ENCODE measurements at regions of chr5 and their contacts with region 1.

Region 1: DNA sequence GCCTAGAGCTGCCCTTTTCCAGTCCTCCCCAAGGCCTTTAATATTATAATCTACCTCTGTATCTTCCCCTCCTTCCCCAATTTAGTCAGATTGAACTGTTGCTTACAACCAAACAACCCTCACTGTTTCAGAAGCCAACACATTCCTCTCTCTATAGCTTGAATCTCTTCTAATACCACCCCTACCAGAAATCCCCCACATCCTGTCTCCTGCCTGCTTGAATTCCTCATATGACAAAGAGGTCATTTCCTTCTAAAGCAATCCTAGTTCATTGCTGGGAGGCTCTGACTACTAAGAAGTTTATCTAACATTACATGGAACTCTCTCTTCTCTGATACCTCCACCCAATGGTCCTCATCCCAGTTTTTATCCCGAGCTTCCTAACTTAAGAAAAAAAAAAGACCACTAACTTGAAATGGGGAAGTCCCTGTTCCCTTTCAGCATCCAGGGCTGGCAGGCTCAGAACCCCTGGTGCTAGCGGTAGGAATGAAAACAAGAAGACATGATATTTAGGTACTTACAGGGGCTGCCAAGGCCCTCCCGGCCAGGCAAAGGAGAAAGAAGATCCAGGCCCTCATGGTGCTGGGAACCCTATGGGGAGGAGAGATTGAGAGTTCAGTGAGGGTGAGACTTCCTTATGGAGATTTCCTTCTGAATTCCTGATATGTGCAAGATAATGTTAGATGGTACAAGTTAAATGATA is 11.0 kb downstream of the SPARC start:
- DNase-seq: no peak
- H3K4me3 ChIP-seq: peak overlapping the region; percentile 39
- H3K27ac ChIP-seq: peak overlapping the region; percentile 90
- H3K27me3 ChIP-seq: no peaks in the 10 kb centered on the region
- CTCF ChIP-seq: peak; percentile 14; the same call in 1 of the 2 replicates

Region 2: DNA sequence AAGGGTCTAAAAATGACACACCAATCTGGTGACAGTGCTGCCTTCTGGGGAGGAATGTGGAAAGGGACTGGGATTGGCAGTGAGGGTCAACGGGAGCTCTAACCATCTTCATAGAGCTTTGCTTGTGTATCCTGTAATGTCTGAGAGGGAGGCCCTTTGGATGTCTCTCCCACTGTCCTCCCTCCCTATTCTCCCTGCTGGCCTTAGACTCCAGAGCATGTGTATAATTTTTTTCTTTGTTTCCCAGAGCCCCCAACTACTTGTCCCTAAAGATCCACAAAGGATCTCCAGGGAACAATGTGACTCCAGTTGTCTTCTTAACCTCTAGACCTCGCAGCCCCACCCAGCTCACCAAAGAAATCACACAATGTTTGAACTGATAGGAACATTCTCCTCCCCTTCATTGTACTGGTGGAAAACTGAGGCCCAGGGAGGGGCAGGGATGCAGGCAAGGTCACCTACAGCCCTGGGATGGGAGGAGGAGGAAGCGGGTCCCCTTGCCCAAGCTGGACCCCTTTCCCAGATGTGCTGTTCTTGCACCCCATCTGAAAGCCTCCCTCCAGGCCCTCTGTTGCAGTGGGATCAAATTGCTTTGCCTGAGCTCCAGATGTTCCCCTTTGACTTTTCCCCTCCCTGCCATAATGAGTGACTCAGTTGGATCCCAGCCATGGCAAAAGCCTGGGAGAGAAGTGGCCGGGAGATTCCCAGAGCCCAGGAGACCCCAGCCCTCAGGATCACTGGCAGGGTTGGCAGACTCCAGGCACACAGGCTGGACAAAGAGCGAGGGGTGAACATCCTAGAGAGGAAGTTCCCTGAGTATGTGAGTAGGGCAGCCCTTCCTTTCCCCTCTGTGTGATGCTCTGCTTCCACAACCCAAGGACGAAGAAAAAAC is 10.8 kb before region 1 on chr5:
- CTCF ChIA-PET with region 1: interaction called, 10 read pairs
- POLR2A ChIA-PET with region 1: interaction called, 81 read pairs
- DNase-seq: no peak
- H3K4me3 ChIP-seq: no peak overlapping the region
- H3K27ac ChIP-seq: peak overlapping the region; percentile 92
- H3K27me3 ChIP-seq: no peaks in the 10 kb centered on the region
- CTCF ChIP-seq: no peak

Measured in AG04450 (cell line).